Cardiac septum (tissue), 1 donor: ENCODE measurements at regions of chr12 and their contacts with region 1.

Region 1: DNA sequence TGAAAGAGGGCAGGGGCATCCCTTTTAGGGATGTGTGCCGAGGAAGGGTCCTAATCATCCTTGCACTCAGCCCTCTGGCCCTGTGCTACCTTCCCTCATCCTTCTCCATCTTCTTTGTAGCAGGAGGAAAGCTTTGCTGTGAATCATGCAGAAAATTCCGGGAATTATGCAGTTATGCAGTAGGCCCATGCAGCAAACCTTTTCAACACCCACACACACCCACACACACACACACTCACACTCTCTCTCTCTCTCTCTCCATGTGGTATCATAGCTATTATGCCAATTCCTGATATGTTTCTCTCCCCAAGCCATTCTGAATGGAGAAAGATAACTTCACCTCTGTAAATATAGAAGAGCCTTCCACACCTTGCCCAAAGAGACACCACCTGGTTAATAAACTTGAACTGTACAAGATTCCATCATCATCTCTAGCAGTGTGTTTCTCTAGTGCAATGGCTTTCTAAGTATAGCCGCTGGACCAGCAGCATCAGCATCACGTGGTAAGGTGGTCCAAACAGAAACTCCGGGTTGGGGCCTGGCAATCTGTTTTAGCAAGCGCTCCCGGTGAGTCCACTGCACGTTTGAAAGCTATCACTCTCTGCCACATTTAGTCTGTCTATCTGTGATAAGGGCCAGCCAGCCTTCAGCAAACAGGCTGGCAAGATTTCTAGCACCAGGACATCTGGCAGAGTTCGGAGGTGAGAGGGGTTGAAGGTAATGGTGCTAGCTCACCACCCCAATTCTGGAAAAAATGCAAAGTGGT is 57.6 kb downstream of the MDM2 start:
- DNase-seq: no peak

Region 2: GRCh38 chr12:69068431-69068830 is 202.8 kb after region 1 on chr12:
- intact Hi-C with region 1: loop called (anchors 2 kb)
- DNase-seq: no peak